Activated B cell treated with CpG ODN at 0.5 μM for 24 hours (primary cell): ENCODE measurements at regions of chr6 and their contacts with region 1.

Region 1: GRCh38 chr6:20401205-20402091 is at the start of gene E2F3:
- DNase-seq: peak; percentile 93
- ATAC-seq: peak; percentile 81
- H3K4me3 Mint-ChIP-seq: peak within 1 kb of the TSS; percentile 96
- H3K27ac Mint-ChIP-seq: peak within 1 kb of the TSS; percentile 79
- H3K4me1 Mint-ChIP-seq: peaks cover 25% of the 10 kb centered on the region
- H3K27me3 Mint-ChIP-seq: no peaks in the 10 kb centered on the region
- CTCF ChIP-seq: no peak
- total RNA-seq, gene E2F3: 14.0 and 15.6 TPM in 2 replicates

Region 2: DNA sequence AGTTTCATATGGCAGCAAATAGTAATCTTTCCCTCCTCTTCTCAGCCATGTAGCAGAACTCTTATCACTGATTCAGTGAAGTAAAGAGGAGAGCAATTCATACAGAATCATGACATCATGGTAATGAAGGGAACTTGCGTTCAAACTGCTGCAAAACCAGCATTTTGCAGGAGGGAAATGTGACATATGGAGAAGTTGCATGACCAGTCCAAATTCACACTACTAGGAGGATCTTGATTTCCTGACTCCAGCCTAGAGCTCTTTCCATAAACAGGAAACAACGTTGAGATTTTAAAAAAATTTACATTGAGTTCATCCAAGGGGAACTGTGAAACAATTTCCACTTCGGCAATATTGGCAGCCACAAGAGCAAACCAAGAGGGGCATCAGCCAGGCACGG is 253.0 kb before region 1 on chr6:
- CTCF ChIA-PET with region 1: no interaction called
- POLR2A ChIA-PET with region 1: no interaction called
- intact Hi-C with region 1: no loop called
- DNase-seq: no peak
- ATAC-seq: no peak
- H3K4me3 Mint-ChIP-seq: no peak overlapping the region
- H3K27ac Mint-ChIP-seq: no peak overlapping the region
- H3K4me1 Mint-ChIP-seq: no peaks in the 10 kb centered on the region
- H3K27me3 Mint-ChIP-seq: no peaks in the 10 kb centered on the region
- CTCF ChIP-seq: no peak

Region 3: GRCh38 chr6:20291764-20292580 is 109.5 kb before region 1 on chr6:
- CTCF ChIA-PET with region 1: interaction called, 16 read pairs
- POLR2A ChIA-PET with region 1: interaction called, 8 read pairs
- intact Hi-C with region 1: loop called (anchors 1 kb)
- DNase-seq: peak; percentile 45
- ATAC-seq: peak; percentile 93
- H3K4me3 Mint-ChIP-seq: peak overlapping the region; percentile 8
- H3K27ac Mint-ChIP-seq: no peak overlapping the region
- H3K4me1 Mint-ChIP-seq: peaks cover 3% of the 10 kb centered on the region
- H3K27me3 Mint-ChIP-seq: peaks cover 2% of the 10 kb centered on the region
- CTCF ChIP-seq: peak; percentile 83

Region 4: GRCh38 chr6:20427856-20428255 is 26.4 kb after region 1 on chr6:
- CTCF ChIA-PET with region 1: interaction called, 3 read pairs
- POLR2A ChIA-PET with region 1: interaction called, 3 read pairs
- intact Hi-C with region 1: loop called (anchors 1 kb)
- DNase-seq: no peak
- ATAC-seq: peak; percentile 68
- H3K4me3 Mint-ChIP-seq: peak overlapping the region; percentile 70
- H3K27ac Mint-ChIP-seq: peak overlapping the region; percentile 80
- H3K4me1 Mint-ChIP-seq: peaks cover 32% of the 10 kb centered on the region
- H3K27me3 Mint-ChIP-seq: no peaks in the 10 kb centered on the region
- CTCF ChIP-seq: no peak

Region 5: GRCh38 chr6:20487660-20488375 is 86.4 kb after region 1 on chr6:
- CTCF ChIA-PET with region 1: no interaction called
- POLR2A ChIA-PET with region 1: no interaction called
- intact Hi-C with region 1: loop called (anchors 5 kb)
- DNase-seq: no peak
- ATAC-seq: no peak
- H3K4me3 Mint-ChIP-seq: no peak overlapping the region
- H3K27ac Mint-ChIP-seq: no peak overlapping the region
- H3K4me1 Mint-ChIP-seq: no peaks in the 10 kb centered on the region
- H3K27me3 Mint-ChIP-seq: no peaks in the 10 kb centered on the region
- CTCF ChIP-seq: no peak

Region 6: DNA sequence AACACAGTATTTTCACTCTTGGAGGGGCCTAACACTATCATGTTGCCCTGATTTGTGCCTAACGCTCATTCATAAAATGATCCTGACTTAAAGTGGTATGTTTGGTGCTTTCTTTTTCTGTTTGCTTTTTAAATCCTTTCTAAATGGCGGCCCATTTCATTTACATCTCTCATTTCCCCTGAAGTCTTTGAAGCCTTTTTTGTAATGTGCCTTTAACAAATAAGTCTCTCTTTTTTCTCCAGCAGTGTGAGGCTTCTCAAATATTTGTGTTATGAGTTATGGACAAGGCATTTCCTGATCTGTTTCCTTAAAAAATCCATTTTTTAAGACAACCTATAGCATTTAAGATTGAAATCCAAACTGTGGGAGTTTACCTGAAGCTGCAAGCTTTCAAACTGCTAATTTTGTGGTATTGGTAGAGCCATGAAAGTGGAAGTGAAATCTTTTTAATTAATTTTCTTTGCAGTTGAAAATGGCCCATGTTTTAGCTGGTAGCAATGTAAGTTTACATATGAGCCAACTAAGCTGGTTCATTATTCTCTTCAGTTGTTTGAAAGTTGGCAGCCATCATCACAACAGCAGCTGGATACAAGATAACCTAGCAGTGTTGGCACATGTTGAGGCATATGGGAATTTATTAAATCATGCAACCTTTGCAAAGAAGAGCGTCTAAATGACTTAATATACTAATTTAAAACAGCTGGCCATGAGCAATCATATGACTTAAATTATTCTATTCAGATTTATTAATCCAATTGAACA is 602.5 kb after region 1 on chr6:
- CTCF ChIA-PET with region 1: no interaction called
- POLR2A ChIA-PET with region 1: interaction called, 10 read pairs
- intact Hi-C with region 1: loop called (anchors 10 kb)
- DNase-seq: no peak
- ATAC-seq: peak; percentile 59
- H3K4me3 Mint-ChIP-seq: peak overlapping the region; percentile 13
- H3K27ac Mint-ChIP-seq: peak overlapping the region; percentile 80
- H3K4me1 Mint-ChIP-seq: peaks cover 36% of the 10 kb centered on the region
- H3K27me3 Mint-ChIP-seq: no peaks in the 10 kb centered on the region
- CTCF ChIP-seq: no peak

Region 7: GRCh38 chr6:21610341-21610740 is 1208.9 kb after region 1 on chr6:
- CTCF ChIA-PET with region 1: no interaction called
- POLR2A ChIA-PET with region 1: interaction called, 10 read pairs
- intact Hi-C with region 1: no loop called
- DNase-seq: no peak
- ATAC-seq: peak; percentile 78
- H3K4me3 Mint-ChIP-seq: no peak overlapping the region
- H3K27ac Mint-ChIP-seq: peak overlapping the region; percentile 63
- H3K4me1 Mint-ChIP-seq: peaks cover 15% of the 10 kb centered on the region
- H3K27me3 Mint-ChIP-seq: peaks cover 2% of the 10 kb centered on the region
- CTCF ChIP-seq: no peak